ENCODE measurements at regions of chr18 and their contacts with region 1.

Region 1: DNA sequence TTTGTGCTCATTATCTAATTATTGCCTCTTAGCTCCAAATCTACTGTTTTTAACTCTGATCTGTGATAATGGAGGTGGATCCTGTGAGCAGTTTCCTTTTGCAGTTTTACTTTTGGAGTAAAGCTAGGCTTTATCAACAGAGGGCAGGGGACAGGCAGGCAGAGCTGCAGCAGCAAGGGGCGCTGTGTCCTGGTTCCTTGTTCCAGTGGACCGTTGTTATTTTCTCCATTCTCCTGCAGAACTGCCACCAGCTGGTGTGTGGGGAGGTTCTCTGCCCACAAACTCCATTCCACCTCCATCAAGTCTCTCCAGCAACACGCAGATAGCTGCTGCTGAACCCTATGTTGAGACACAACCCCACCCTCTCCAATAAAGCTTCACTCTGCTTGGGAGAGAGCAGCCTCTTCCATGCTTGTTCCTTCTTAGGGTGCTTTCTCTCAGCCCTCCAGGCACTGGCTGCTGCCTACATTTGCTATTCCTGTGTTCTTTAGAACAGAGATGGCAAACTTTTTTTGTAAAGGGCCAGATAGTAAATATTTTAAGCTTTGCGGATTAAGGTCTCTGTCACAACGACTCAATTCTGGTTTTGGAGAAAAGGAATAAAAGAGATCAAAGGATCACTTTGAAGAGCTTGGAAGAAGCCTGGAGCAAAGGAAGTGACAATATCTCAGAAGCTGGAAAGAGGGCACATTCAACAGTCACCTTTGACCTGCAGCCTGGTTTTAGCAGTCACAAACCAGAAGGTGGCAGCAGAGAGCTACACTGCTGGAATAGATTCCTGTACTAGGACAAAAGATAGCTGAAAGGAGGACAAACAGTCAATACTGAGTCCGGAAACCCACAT is 208.8 kb downstream of the CCDC178 start:
- DNase-seq: peak; percentile 53
- H3K4me3 ChIP-seq: peak overlapping the region in 1 of 2 experiments; percentile 2; a peak in 1 of 4 replicates
- H3K27ac ChIP-seq: no peak overlapping the region; a peak in 1 of 4 replicates
- H3K4me1 ChIP-seq: peaks cover 0 to 4% of the 10 kb centered on the region in 2 experiments; a peak in 1 of 4 replicates
- H3K27me3 ChIP-seq: no peaks in the 10 kb centered on the region
- CTCF ChIP-seq: peak; percentile 95
- EP300 ChIP-seq: no peak
- RAD21 ChIP-seq: peak; percentile 86

Region 2: DNA sequence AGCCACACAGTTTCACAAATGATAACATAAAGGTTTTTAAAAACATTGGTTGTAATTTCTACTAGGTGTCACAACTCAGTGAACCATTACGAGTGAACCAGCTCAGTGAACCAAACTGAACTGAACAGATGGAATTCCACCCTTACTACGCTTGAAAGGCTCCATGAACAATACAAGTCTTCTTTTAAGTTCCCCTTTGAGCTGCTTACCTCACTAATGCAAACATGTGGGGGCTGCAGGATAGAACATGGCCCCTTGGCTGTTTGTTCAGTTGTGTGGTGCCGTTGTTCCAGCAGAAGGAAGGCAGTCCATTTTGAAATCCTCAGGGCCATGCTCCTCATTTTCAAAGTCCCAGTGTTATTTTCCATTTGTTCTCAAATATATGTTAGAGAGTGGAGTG is 428.1 kb before region 1 on chr18:
- CTCF ChIA-PET with region 1: no interaction called
- POLR2A ChIA-PET with region 1: no interaction called
- DNase-seq: no peak
- H3K4me3 ChIP-seq: no peak overlapping the region
- H3K27ac ChIP-seq: no peak overlapping the region
- H3K4me1 ChIP-seq: no peaks in the 10 kb centered on the region
- H3K27me3 ChIP-seq: no peaks in the 10 kb centered on the region
- CTCF ChIP-seq: no peak
- EP300 ChIP-seq: no peak
- RAD21 ChIP-seq: no peak

Region 3: DNA sequence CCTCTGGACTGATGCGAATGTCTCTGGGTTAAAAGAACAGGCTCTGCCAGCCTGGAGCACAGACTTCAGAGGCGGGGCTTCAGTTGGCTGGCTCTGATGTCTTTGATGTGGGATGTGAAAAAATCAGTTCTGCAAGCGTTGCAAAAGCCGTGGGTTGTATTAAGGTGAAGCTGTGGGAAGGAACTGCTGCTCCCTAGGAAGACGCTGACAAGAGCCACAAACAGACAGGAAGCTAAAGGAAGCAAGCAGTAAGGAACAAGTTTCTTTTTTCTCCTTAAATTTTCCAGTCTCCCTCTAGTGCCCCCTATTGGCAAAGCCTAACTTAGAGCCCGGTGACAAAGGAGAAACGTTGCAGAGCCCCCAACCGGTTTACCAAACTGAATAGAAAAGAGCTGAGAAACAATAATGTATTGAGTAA is 30.2 kb before region 1 on chr18:
- CTCF ChIA-PET with region 1: interaction called, 16 read pairs
- POLR2A ChIA-PET with region 1: no interaction called
- DNase-seq: peak; percentile 16
- H3K4me3 ChIP-seq: peak overlapping the region in 1 of 2 experiments; percentile 46; a peak in 1 of 4 replicates
- H3K27ac ChIP-seq: no peak overlapping the region
- H3K4me1 ChIP-seq: no peaks in the 10 kb centered on the region; a peak in 1 of 4 replicates
- H3K27me3 ChIP-seq: no peaks in the 10 kb centered on the region
- CTCF ChIP-seq: peak; percentile 63
- EP300 ChIP-seq: no peak
- RAD21 ChIP-seq: peak; percentile 23; the same call in 1 of the 2 replicates

Region 4: GRCh38 chr18:33210575-33211189 is 21.0 kb before region 1 on chr18:
- CTCF ChIA-PET with region 1: interaction called, 48 read pairs
- POLR2A ChIA-PET with region 1: no interaction called
- DNase-seq: peak; percentile 12
- H3K4me3 ChIP-seq: no peak overlapping the region; a peak in 1 of 4 replicates
- H3K27ac ChIP-seq: no peak overlapping the region
- H3K4me1 ChIP-seq: no peaks in the 10 kb centered on the region
- H3K27me3 ChIP-seq: no peaks in the 10 kb centered on the region
- CTCF ChIP-seq: peak; percentile 73
- EP300 ChIP-seq: no peak
- RAD21 ChIP-seq: peak; percentile 63

Region 5: DNA sequence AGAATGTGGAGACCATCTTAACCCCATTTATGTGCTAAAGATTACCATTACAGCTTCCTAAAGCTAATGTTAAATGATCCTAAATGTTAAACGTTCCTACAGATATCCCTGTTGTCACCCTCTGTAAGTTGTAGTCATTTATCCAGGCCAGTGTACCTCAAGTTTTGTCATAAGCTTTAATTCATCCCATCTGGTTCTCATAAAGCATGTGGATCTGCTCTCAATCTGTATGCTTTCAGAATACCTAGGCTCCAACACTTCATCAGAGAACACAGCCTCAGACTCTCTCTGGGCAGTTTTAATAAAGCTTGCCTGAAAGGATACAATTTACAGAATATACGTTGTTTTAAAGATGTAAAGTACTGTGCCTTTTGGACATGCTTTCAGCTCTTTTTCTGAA is 213.0 kb after region 1 on chr18:
- CTCF ChIA-PET with region 1: interaction called, 10 read pairs
- POLR2A ChIA-PET with region 1: no interaction called
- DNase-seq: peak; percentile 54
- H3K4me3 ChIP-seq: no peak overlapping the region
- H3K27ac ChIP-seq: no peak overlapping the region
- H3K4me1 ChIP-seq: peaks cover 0 to 2% of the 10 kb centered on the region in 2 experiments; a peak in 2 of 4 replicates
- H3K27me3 ChIP-seq: peaks cover 13% of the 10 kb centered on the region; the same call in 1 of the 2 replicates
- CTCF ChIP-seq: no peak
- EP300 ChIP-seq: no peak
- RAD21 ChIP-seq: no peak

Region 6: GRCh38 chr18:33495278-33495677 is 263.6 kb after region 1 on chr18:
- CTCF ChIA-PET with region 1: interaction called, 45 read pairs
- POLR2A ChIA-PET with region 1: no interaction called
- DNase-seq: peak; percentile 36
- H3K4me3 ChIP-seq: no peak overlapping the region; a peak in 1 of 4 replicates
- H3K27ac ChIP-seq: no peak overlapping the region
- H3K4me1 ChIP-seq: no peaks in the 10 kb centered on the region; a peak in 1 of 4 replicates
- H3K27me3 ChIP-seq: no peaks in the 10 kb centered on the region
- CTCF ChIP-seq: peak; percentile 54
- EP300 ChIP-seq: no peak
- RAD21 ChIP-seq: peak; percentile 84

Region 7: DNA sequence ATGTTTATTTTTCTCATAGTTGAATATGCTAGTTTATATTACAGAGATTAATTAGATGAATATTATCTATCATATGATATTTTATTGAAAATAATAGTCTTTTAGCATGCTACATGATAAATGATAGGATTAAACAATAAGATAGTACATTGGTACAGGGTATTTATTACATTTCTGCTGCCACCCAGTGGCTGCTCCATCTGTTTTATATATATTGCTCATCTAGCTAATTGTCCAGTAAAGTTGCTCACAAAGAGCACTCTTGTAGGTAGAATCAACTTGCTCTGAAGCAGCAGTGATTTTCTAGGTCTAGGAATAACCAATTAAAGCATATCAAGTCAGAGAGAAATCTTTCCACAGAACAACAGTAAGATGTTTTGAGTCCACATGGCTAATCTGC is 529.7 kb after region 1 on chr18:
- CTCF ChIA-PET with region 1: interaction called, 18 read pairs
- POLR2A ChIA-PET with region 1: no interaction called
- DNase-seq: peak; percentile 27
- H3K4me3 ChIP-seq: no peak overlapping the region
- H3K27ac ChIP-seq: no peak overlapping the region
- H3K4me1 ChIP-seq: no peaks in the 10 kb centered on the region
- H3K27me3 ChIP-seq: no peaks in the 10 kb centered on the region
- CTCF ChIP-seq: peak; percentile 53
- EP300 ChIP-seq: no peak
- RAD21 ChIP-seq: peak; percentile 64